Panc1 (cell line): ENCODE measurements at regions of chr11 and their contacts with region 1.

Region 1: DNA sequence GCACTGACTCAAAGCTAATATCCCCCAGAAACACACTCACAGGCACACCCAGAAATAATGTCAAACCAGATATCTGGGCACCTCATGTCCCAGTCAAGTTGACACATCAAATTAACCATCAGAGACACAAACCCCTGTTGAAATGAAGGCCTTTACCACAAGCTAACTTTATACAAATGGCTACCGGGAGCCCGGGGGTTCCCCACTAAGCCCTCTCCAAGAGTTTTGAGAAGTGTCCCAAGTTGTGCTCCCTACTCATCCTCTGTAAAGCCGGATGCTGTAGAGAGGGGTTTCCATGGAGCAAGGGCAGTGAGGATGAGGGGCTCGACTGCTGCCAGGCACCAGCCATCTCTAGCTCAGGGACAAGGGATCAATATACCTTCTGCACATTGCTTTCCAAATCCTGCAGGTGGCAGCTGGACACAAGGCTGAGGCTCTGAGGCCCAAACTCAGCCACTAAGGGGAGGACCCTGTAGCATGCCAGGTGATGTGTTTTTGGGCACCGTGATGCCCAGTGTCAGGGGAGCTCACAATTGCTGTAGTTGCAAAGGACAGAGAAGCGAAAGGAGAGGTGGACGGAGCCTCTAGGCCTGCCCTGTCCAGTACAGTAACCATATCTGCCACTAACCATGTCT is 145.7 kb downstream of the TTC17 start:
- DNase-seq: no peak
- ATAC-seq: peak; percentile 86
- H3K4me3 ChIP-seq: no peak overlapping the region
- H3K27ac ChIP-seq: no peak overlapping the region
- H3K4me1 ChIP-seq: peaks cover 3% of the 10 kb centered on the region; the same call in 1 of the 2 replicates
- H3K27me3 ChIP-seq: 0 out of 2 replicates have a peak, but pooled peaks cover 3% of the 10 kb centered on the region
- CTCF ChIP-seq: peak; percentile 74

Region 2: GRCh38 chr11:43542750-43543712 is 38.6 kb after region 1 on chr11:
- CTCF ChIA-PET with region 1: no interaction called
- POLR2A ChIA-PET with region 1: no interaction called
- in situ Hi-C with region 1: no loop called
- intact Hi-C with region 1: no loop called
- DNase-seq: no peak
- ATAC-seq: no peak
- H3K4me3 ChIP-seq: no peak overlapping the region
- H3K27ac ChIP-seq: no peak overlapping the region
- H3K4me1 ChIP-seq: peaks cover 3% of the 10 kb centered on the region; the same call in 1 of the 2 replicates
- H3K27me3 ChIP-seq: peaks cover 22% of the 10 kb centered on the region
- CTCF ChIP-seq: no peak

Region 3: GRCh38 chr11:43567396-43567975 is 63.1 kb after region 1 on chr11:
- CTCF ChIA-PET with region 1: interaction called, 12 read pairs
- POLR2A ChIA-PET with region 1: no interaction called
- in situ Hi-C with region 1: no loop called
- intact Hi-C with region 1: loop called (anchors 2 kb)
- DNase-seq: no peak
- ATAC-seq: peak; percentile 94
- H3K4me3 ChIP-seq: no peak overlapping the region
- H3K27ac ChIP-seq: no peak overlapping the region
- H3K4me1 ChIP-seq: no peaks in the 10 kb centered on the region
- H3K27me3 ChIP-seq: peaks cover 32% of the 10 kb centered on the region
- CTCF ChIP-seq: peak; percentile 88

Region 4: GRCh38 chr11:43852057-43852636 is 347.7 kb after region 1 on chr11:
- CTCF ChIA-PET with region 1: interaction called, 11 read pairs
- POLR2A ChIA-PET with region 1: no interaction called
- in situ Hi-C with region 1: no loop called
- intact Hi-C with region 1: loop called (anchors 2 kb)
- DNase-seq: peak; percentile 57
- ATAC-seq: peak; percentile 88
- H3K4me3 ChIP-seq: no peak overlapping the region
- H3K27ac ChIP-seq: no peak overlapping the region
- H3K4me1 ChIP-seq: no peaks in the 10 kb centered on the region
- H3K27me3 ChIP-seq: no peaks in the 10 kb centered on the region
- CTCF ChIP-seq: peak; percentile 81